ENCODE measurements at regions of chr5 and their contacts with region 1.

Region 1: DNA sequence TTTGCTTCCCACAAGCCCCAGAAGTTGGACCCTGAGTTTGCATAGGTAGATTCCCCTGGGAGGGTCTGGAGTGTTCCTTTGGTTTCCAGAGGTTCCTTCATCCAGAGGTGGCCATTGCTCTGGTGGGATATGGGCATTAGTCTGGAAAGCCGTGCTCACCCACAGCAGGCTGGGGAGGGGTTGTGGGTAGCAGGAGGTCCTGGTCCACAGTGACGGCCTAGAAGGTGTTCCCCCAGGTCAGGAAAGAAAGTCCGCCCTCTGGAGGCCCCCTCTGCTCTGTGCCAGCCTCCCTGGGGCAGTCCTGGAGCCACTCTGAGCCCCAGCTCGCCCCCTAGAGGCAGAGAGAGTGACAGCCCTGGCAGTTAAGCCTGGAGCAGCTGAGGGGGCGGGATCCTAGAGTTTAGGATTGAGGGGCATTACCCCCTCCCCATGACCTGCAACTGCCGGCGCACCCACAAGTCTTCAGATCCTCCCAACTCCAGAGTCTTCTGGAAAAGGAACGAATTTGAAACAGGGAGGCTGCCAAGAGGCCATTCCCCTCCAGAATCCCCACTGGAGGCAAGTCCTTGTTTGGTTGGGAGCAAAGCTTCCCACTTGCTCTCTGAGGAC is 36.8 kb downstream of the NDST1 start:
- DNase-seq: peak; percentile 91
- H3K4me3 Mint-ChIP-seq: no peak overlapping the region
- H3K27ac Mint-ChIP-seq: no peak overlapping the region
- H3K4me1 Mint-ChIP-seq: peaks cover 26% of the 10 kb centered on the region
- H3K27me3 Mint-ChIP-seq: no peaks in the 10 kb centered on the region
- CTCF ChIP-seq: peak; percentile 99

Region 2: GRCh38 chr5:150402229-150402773 is 142.4 kb before region 1 on chr5:
- CTCF ChIA-PET with region 1: no interaction called
- POLR2A ChIA-PET with region 1: no interaction called
- intact Hi-C with region 1: no loop called
- DNase-seq: no peak
- H3K4me3 Mint-ChIP-seq: no peak overlapping the region
- H3K27ac Mint-ChIP-seq: no peak overlapping the region
- H3K4me1 Mint-ChIP-seq: no peaks in the 10 kb centered on the region
- H3K27me3 Mint-ChIP-seq: no peaks in the 10 kb centered on the region
- CTCF ChIP-seq: no peak

Region 3: DNA sequence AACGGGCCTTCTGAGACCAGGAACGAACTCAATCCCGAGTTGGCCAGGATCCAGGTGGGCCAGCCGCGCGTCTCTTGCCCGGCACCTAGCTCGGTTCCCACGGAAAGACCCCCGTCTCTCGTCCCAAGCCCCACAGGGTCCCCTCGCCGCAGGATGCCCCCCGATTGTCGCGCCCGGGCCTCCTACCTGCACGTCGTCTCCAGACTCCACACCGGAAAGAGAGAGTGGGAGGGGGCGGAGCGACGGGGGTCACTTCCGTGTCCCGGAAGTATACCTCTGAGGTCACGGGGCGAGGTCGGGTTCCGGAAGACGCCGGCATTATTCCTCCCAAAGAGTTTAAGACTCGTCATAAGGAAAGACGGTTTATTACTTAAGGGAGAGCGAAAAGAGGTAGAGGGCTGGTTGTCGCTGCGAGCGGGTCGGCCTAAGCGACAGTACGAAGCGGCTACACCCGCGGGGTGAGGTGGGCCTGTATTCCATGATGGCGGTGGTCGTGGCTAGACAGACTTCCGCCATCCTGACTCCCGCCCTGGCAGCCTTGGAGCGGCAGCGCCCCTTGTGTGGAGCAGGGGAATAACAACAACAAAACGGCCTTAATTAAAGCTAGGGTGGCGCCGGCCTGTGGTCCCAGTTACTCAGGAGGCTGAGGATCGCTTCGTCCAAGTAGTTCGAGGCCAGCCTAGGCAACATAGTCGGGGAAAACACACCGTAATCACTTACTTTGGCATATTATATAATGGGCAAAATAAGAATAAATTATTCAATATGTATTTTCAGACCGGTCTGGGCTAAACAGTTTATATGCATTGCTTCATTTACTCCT is 95.0 kb before region 1 on chr5 and contains the start of gene RPS14:
- CTCF ChIA-PET with region 1: interaction called, 142 read pairs
- POLR2A ChIA-PET with region 1: interaction called, 30 read pairs
- intact Hi-C with region 1: no loop called
- DNase-seq: peak; percentile 98
- H3K4me3 Mint-ChIP-seq: peak within 1 kb of the TSS; percentile 85
- H3K27ac Mint-ChIP-seq: peak within 1 kb of the TSS; percentile 100
- H3K4me1 Mint-ChIP-seq: peaks cover 22% of the 10 kb centered on the region
- H3K27me3 Mint-ChIP-seq: no peaks in the 10 kb centered on the region
- CTCF ChIP-seq: peak; percentile 92
- total RNA-seq, gene RPS14: 5,481 and 5,921 TPM in 2 replicates

Region 4: GRCh38 chr5:150486402-150487198 is 58.1 kb before region 1 on chr5:
- CTCF ChIA-PET with region 1: interaction called, 23 read pairs
- POLR2A ChIA-PET with region 1: interaction called, 22 read pairs
- intact Hi-C with region 1: loop called (anchors 1 kb)
- DNase-seq: peak; percentile 51
- H3K4me3 Mint-ChIP-seq: peak overlapping the region; percentile 72
- H3K27ac Mint-ChIP-seq: peak overlapping the region; percentile 63
- H3K4me1 Mint-ChIP-seq: peaks cover 43% of the 10 kb centered on the region
- H3K27me3 Mint-ChIP-seq: no peaks in the 10 kb centered on the region
- CTCF ChIP-seq: peak; percentile 13

Region 5: GRCh38 chr5:150517272-150518152 is 27.2 kb before region 1 on chr5:
- CTCF ChIA-PET with region 1: interaction called, 33 read pairs
- POLR2A ChIA-PET with region 1: interaction called, 15 read pairs
- intact Hi-C with region 1: no loop called
- DNase-seq: peak; percentile 94
- H3K4me3 Mint-ChIP-seq: peak overlapping the region; percentile 52
- H3K27ac Mint-ChIP-seq: peak overlapping the region; percentile 71
- H3K4me1 Mint-ChIP-seq: peaks cover 45% of the 10 kb centered on the region
- H3K27me3 Mint-ChIP-seq: no peaks in the 10 kb centered on the region
- CTCF ChIP-seq: no peak

Region 6: DNA sequence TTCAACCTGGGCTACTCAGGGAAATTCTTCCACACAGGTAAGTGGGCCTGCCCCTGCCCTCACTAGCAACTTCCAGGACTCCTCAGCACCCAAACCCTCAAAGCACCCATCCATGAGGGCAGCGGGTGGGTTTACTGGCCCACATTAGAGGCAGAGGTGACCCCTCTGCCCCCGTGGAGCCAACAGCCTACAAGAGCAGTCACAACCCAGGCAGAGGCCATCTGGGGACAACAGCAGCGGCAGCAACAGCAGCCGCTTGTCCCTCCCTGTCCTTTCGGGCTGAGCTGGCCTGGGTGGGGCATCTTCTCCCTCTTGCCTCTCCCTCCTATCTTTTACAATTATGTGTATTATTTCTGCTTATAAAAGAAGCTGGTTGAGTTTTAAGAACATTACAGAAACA is 11.7 kb before region 1 on chr5:
- CTCF ChIA-PET with region 1: interaction called, 21 read pairs
- POLR2A ChIA-PET with region 1: interaction called, 5 read pairs
- intact Hi-C with region 1: no loop called
- DNase-seq: no peak
- H3K4me3 Mint-ChIP-seq: no peak overlapping the region
- H3K27ac Mint-ChIP-seq: no peak overlapping the region
- H3K4me1 Mint-ChIP-seq: peaks cover 9% of the 10 kb centered on the region
- H3K27me3 Mint-ChIP-seq: no peaks in the 10 kb centered on the region
- CTCF ChIP-seq: no peak

Region 7: DNA sequence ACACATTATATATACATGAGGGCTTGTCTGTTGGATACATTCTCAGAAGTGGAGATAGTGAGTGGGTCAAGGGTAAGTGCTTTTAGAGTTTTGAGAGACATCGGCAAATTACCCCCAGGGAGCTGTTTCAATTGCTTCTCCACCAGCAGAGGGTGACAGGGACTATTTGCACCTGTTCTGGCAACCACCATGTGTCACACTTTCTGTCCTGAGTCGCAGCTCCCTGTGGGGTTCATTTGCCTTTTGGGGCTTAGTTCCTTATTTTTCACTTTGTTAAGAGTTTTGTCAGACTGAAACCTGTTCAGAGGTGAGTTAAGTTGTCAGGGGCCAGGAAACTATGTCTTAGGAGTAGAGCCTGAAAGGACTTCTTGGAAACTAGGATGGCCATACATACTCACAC is 882.5 kb after region 1 on chr5:
- CTCF ChIA-PET with region 1: no interaction called
- POLR2A ChIA-PET with region 1: no interaction called
- intact Hi-C with region 1: no loop called
- DNase-seq: no peak
- H3K4me3 Mint-ChIP-seq: no peak overlapping the region
- H3K27ac Mint-ChIP-seq: no peak overlapping the region
- H3K4me1 Mint-ChIP-seq: no peaks in the 10 kb centered on the region
- H3K27me3 Mint-ChIP-seq: peaks cover 24% of the 10 kb centered on the region
- CTCF ChIP-seq: no peak